B cell (primary cell): ENCODE measurements at regions of chr1 and their contacts with region 1.

Region 1: GRCh38 chr1:158998781-158999161 is 10.9 kb upstream of the IFI16 start:
- DNase-seq: peak; percentile 80
- ATAC-seq: peak; percentile 73
- H3K4me3 ChIP-seq: no peak overlapping the region
- H3K4me3 Mint-ChIP-seq: peak overlapping the region; percentile 55
- H3K27ac ChIP-seq: no peak overlapping the region
- H3K27ac Mint-ChIP-seq: no peak overlapping the region
- H3K4me1 ChIP-seq: peaks cover 6 to 12% of the 10 kb centered on the region in 2 donors
- H3K4me1 Mint-ChIP-seq: peaks cover 22% of the 10 kb centered on the region
- H3K27me3 ChIP-seq: no peaks in the 10 kb centered on the region
- H3K27me3 Mint-ChIP-seq: no peaks in the 10 kb centered on the region
- CTCF ChIP-seq: peak; percentile 98

Region 2: DNA sequence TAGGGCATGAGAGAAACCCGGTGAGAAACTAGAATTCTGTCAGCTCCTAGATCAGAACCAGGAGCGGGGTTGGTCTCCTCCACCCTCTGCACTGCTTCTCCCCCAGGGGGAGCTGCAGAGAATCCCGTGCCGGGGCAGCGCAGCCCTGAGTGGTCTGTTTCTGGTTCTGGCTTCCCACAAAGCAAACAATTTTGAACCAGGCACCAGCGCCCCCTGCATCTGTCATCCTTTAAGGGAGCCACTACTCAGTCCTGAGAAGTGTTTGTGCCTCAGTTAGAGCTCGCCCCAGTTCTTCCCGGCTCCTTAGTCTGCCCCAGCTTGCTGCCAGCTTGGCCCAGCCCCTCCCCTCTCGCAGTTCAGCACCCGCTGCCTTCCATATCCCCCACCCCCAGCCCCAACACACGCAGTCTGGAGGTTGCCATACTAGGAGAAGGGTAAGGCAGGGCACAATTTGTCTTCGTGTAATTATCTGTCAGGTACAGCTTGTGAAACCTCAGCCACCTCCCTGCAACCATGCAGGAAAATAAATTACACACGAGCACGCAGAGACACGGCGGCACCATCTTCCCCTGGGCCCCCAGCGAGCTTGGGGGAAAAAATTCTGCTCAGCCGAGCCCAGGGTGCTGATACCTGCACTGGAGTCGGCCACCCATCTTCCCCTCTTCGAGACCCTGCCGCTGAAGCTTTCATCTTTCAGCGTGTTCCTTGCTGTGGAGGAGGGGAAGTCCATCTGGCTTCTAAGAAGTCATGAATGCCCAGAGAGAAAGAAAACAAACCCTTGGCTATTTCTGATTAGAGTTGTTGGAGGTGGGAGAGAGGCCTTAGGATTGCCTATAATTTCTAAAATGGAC is 880.7 kb before region 1 on chr1:
- CTCF ChIA-PET with region 1: interaction called, 3 read pairs
- POLR2A ChIA-PET with region 1: no interaction called
- intact Hi-C with region 1: loop called (anchors 2 kb)
- DNase-seq: peak; percentile 76
- ATAC-seq: peak; percentile 58
- H3K4me3 ChIP-seq: peak overlapping the region in 3 of 5 experiments; percentile 15 to 44 (median 32)
- H3K4me3 Mint-ChIP-seq: peak overlapping the region; percentile 77
- H3K27ac ChIP-seq: no peak overlapping the region
- H3K27ac Mint-ChIP-seq: no peak overlapping the region
- H3K4me1 ChIP-seq: peaks cover 22 to 32% of the 10 kb centered on the region in 2 donors
- H3K4me1 Mint-ChIP-seq: peaks cover 28% of the 10 kb centered on the region
- H3K27me3 ChIP-seq: peaks cover 0 to 38% (median 16%) of the 10 kb centered on the region in 4 experiments
- H3K27me3 Mint-ChIP-seq: peaks cover 35% of the 10 kb centered on the region
- CTCF ChIP-seq: peak; percentile 85

Region 3: GRCh38 chr1:158506369-158506987 is 492.3 kb before region 1 on chr1:
- CTCF ChIA-PET with region 1: interaction called, 19 read pairs
- POLR2A ChIA-PET with region 1: no interaction called
- intact Hi-C with region 1: no loop called
- DNase-seq: peak; percentile 49
- ATAC-seq: peak; percentile 58
- H3K4me3 ChIP-seq: no peak overlapping the region
- H3K4me3 Mint-ChIP-seq: no peak overlapping the region
- H3K27ac ChIP-seq: no peak overlapping the region
- H3K27ac Mint-ChIP-seq: no peak overlapping the region
- H3K4me1 ChIP-seq: no peaks in the 10 kb centered on the region
- H3K4me1 Mint-ChIP-seq: no peaks in the 10 kb centered on the region
- H3K27me3 ChIP-seq: peaks cover 0 to 9% (median 0%) of the 10 kb centered on the region in 4 experiments
- H3K27me3 Mint-ChIP-seq: peaks cover 39% of the 10 kb centered on the region
- CTCF ChIP-seq: peak; percentile 58

Region 4: DNA sequence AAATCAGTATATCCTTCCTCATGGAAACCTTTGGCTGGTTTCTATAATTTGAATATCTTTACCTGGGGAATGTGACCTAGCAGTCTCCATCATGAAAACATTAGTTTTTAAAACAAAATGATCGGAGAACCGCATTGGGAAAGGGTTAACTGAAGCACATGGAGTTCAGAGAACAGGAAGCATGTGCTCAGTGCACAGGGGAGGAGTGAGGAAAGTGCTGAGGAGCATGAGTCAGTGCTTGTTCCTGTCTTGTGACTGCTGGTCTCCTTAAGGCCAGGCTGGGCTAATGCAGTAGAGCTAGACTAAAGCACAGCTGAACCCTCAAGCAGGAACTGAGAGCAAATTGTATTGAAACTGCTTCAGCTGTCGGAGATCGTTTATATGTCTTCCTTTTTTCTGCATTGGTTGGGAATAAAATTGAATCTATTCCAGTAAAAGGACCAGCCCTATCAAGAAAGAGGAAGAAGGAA is 16.7 kb after region 1 on chr1:
- CTCF ChIA-PET with region 1: interaction called, 5 read pairs
- POLR2A ChIA-PET with region 1: no interaction called
- intact Hi-C with region 1: loop called (anchors 2 kb)
- DNase-seq: peak; percentile 87
- ATAC-seq: peak; percentile 99
- H3K4me3 ChIP-seq: peak overlapping the region in 4 of 5 experiments; percentile 7 to 100 (median 20)
- H3K4me3 Mint-ChIP-seq: peak overlapping the region; percentile 87
- H3K27ac ChIP-seq: peak overlapping the region; percentile 63 to 72
- H3K27ac Mint-ChIP-seq: peak overlapping the region; percentile 95
- H3K4me1 ChIP-seq: peaks cover 47 to 52% of the 10 kb centered on the region in 2 donors
- H3K4me1 Mint-ChIP-seq: peaks cover 62% of the 10 kb centered on the region
- H3K27me3 ChIP-seq: no peaks in the 10 kb centered on the region
- H3K27me3 Mint-ChIP-seq: no peaks in the 10 kb centered on the region
- CTCF ChIP-seq: no peak

Region 5: GRCh38 chr1:159207774-159208173 is 209.0 kb after region 1 on chr1:
- CTCF ChIA-PET with region 1: no interaction called
- POLR2A ChIA-PET with region 1: no interaction called
- intact Hi-C with region 1: no loop called
- DNase-seq: no peak
- ATAC-seq: no peak
- H3K4me3 ChIP-seq: no peak overlapping the region
- H3K4me3 Mint-ChIP-seq: no peak overlapping the region
- H3K27ac ChIP-seq: no peak overlapping the region
- H3K27ac Mint-ChIP-seq: no peak overlapping the region
- H3K4me1 ChIP-seq: peaks cover 0 to 3% of the 10 kb centered on the region in 2 donors
- H3K4me1 Mint-ChIP-seq: peaks cover 2% of the 10 kb centered on the region
- H3K27me3 ChIP-seq: peaks cover 0 to 45% (median 11%) of the 10 kb centered on the region in 4 experiments
- H3K27me3 Mint-ChIP-seq: peaks cover 74% of the 10 kb centered on the region
- CTCF ChIP-seq: no peak

Region 6: GRCh38 chr1:159829273-159829634 is 830.5 kb after region 1 on chr1:
- CTCF ChIA-PET with region 1: no interaction called
- POLR2A ChIA-PET with region 1: no interaction called
- intact Hi-C with region 1: no loop called
- DNase-seq: peak; percentile 58
- ATAC-seq: peak; percentile 76
- H3K4me3 ChIP-seq: no peak overlapping the region
- H3K4me3 Mint-ChIP-seq: no peak overlapping the region
- H3K27ac ChIP-seq: no peak overlapping the region
- H3K27ac Mint-ChIP-seq: no peak overlapping the region
- H3K4me1 ChIP-seq: peaks cover 6 to 25% of the 10 kb centered on the region in 2 donors
- H3K4me1 Mint-ChIP-seq: peaks cover 18% of the 10 kb centered on the region
- H3K27me3 ChIP-seq: peaks cover 0 to 8% (median 3%) of the 10 kb centered on the region in 4 experiments
- H3K27me3 Mint-ChIP-seq: peaks cover 12% of the 10 kb centered on the region
- CTCF ChIP-seq: peak; percentile 34